Activated T-helper 1 cell treated with anti-CD3 and anti-CD28 coated beads, Interleukin-12 subunit alpha, Interleukin-12 subunit beta, Interleukin-2, Interleukin-4 antibody, amounts not matched to agents 30 ng/mL and 10 ng/mL and 1 ng/mL, durations not matched to agents 14 hours and 24 hours and 36 hours (primary cell): ENCODE measurements at regions of chr17 and their contacts with region 1.

Region 1: GRCh38 chr17:82205719-82206508 is 6.7 kb downstream of the CCDC57 start:
- DNase-seq: peak; percentile 73
- H3K4me3 Mint-ChIP-seq: peak overlapping the region; percentile 63
- H3K27ac Mint-ChIP-seq: peak overlapping the region; percentile 94
- H3K4me1 Mint-ChIP-seq: peaks cover 53% of the 10 kb centered on the region
- H3K27me3 Mint-ChIP-seq: no peaks in the 10 kb centered on the region

Region 2: DNA sequence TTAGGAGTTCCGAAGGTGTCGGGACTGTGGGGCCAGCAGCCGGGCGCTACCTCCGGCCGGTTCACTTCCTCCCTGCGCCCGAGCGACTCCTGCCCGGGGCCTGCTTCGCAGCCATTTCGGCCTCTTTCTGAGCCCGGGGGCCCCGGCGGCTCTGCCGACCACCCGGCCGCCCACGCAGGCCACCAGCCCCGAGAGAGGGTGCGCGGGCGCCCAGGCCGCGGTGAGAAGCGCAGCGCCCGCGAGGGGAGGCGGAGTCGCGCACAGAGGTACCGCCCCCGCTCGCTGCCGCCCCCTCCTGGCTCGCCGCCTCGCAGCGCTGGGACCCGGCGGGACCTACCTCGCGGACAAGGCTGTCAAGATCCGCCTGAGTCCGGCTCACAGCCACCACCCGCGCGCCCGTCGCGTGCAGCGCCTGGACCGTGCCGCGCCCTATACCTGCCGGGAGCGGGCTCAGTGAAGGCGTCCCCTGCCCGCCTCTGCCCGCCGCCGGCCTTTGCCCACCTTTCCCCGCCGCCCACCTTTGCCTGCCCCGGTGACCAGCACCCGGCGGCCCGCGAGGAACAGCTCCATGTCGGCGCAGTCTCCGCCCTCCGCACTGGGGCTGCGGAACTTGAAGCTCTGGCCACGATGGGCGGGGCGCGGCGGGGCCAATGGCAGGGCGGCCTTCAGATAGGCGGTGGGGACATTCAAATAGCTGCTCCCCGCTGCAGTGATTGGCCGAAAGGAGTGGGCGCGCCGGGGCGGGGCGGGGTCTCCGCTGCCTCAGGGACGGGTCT is 168.6 kb before region 1 on chr17 and contains the start of gene DCXR:
- intact Hi-C with region 1: no loop called
- DNase-seq: peak; percentile 98
- H3K4me3 Mint-ChIP-seq: peak within 1 kb of the TSS; percentile 85
- H3K27ac Mint-ChIP-seq: peak within 1 kb of the TSS; percentile 93
- H3K4me1 Mint-ChIP-seq: peaks cover 24% of the 10 kb centered on the region
- H3K27me3 Mint-ChIP-seq: peaks cover 2% of the 10 kb centered on the region
- total RNA-seq, gene DCXR: 123 and 125 TPM in 2 replicates

Region 3: DNA sequence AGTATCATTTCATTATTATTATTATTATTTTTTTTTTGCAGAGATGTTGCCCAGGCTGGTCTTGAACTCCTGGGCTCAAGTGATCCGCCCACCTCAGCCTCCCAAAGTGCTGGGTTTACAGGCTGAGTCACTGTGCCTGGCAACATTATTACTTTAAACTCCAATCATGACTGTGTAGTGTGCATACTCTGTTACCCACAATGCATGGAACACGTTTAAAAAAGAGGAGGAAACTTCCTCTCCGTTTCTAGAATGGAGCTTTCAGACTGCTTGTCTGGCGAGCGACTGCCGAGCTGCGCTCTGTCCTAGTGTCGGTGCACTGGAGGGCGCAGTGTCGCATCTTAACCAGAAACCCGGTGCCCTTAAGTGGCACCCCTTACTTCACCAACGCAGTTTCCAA is 85.8 kb before region 1 on chr17:
- intact Hi-C with region 1: loop called (anchors 10 kb)
- DNase-seq: no peak
- H3K4me3 Mint-ChIP-seq: no peak overlapping the region
- H3K27ac Mint-ChIP-seq: no peak overlapping the region
- H3K4me1 Mint-ChIP-seq: peaks cover 23% of the 10 kb centered on the region
- H3K27me3 Mint-ChIP-seq: no peaks in the 10 kb centered on the region

Region 4: GRCh38 chr17:82228842-82229697 is 23.2 kb after region 1 on chr17 and contains the start of gene SLC16A3:
- intact Hi-C with region 1: loop called (anchors 1 kb)
- DNase-seq: peak; percentile 72
- H3K4me3 Mint-ChIP-seq: peak within 1 kb of the TSS; percentile 94
- H3K27ac Mint-ChIP-seq: peak within 1 kb of the TSS; percentile 90
- H3K4me1 Mint-ChIP-seq: peaks cover 5% of the 10 kb centered on the region
- H3K27me3 Mint-ChIP-seq: no peaks in the 10 kb centered on the region
- total RNA-seq, gene SLC16A3: 111 and 115 TPM in 2 replicates

Region 5: DNA sequence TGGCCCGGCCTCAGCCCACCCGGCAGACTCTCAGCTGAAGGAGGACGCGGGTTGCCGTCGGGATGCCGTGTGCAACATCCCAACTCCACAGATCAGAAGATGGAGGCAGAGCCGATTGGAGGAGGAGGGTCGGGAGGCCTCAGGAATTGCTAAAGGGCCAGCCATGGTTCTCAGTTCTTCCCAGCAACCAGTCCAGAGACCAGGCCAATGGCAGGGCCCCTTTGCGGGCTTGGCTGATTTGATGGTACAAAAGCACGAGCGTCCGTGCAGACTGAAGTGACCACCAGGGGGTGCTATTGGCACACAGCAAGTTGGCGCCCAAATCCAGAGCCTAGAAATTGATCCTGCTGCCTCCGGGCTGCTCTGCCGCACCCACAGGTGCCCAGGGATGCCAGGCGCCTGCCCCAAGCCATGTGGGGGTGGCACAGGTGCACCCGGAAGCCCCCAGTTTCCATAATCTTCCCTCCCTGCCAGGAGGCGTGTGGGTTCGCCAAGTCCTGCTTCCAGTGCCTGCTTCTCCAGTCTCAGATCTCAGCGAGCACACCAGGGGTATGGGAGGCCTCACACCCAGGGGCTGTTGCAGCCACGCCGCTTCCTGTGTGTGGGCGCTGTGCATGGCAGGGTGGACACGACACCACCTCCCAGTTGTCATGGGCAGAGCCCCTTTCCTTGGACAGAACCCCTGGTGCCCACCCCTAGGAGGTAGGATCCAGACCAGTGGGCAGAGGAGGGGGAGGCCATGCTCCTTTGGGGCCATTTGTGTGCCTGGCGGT is 146.0 kb after region 1 on chr17:
- intact Hi-C with region 1: no loop called
- DNase-seq: peak; percentile 73
- H3K4me3 Mint-ChIP-seq: no peak overlapping the region
- H3K27ac Mint-ChIP-seq: no peak overlapping the region
- H3K4me1 Mint-ChIP-seq: no peaks in the 10 kb centered on the region
- H3K27me3 Mint-ChIP-seq: no peaks in the 10 kb centered on the region